ENCODE measurements at regions of chr22 and their contacts with region 1.

Region 1: DNA sequence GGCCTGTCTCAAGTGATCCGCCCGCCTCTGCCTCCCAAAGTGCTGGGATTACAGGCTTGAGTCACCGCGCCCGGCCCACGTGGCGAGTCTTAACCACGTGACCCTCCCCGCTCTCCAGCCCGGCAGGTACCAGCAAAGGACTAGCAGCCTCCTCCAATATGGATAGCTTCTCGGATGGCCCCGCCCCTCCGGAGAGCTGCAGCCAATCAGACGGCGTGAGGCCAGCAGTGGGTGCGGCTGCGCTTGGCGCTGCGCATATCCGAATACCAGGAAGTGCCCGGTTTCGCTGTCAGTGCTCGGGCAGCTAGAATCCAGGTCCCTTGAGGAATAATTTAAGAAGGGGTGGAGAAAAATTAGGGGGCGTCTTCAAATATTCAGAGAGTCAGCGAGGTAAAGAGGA is 14.7 kb upstream of the PISD start:
- DNase-seq: peak; percentile 84
- ATAC-seq: peak; percentile 99
- H3K4me3 Mint-ChIP-seq: peak overlapping the region; percentile 96
- H3K27ac Mint-ChIP-seq: peak overlapping the region; percentile 94
- H3K4me1 Mint-ChIP-seq: peaks cover 25% of the 10 kb centered on the region
- H3K27me3 Mint-ChIP-seq: no peaks in the 10 kb centered on the region
- CTCF ChIP-seq: no peak

Region 2: DNA sequence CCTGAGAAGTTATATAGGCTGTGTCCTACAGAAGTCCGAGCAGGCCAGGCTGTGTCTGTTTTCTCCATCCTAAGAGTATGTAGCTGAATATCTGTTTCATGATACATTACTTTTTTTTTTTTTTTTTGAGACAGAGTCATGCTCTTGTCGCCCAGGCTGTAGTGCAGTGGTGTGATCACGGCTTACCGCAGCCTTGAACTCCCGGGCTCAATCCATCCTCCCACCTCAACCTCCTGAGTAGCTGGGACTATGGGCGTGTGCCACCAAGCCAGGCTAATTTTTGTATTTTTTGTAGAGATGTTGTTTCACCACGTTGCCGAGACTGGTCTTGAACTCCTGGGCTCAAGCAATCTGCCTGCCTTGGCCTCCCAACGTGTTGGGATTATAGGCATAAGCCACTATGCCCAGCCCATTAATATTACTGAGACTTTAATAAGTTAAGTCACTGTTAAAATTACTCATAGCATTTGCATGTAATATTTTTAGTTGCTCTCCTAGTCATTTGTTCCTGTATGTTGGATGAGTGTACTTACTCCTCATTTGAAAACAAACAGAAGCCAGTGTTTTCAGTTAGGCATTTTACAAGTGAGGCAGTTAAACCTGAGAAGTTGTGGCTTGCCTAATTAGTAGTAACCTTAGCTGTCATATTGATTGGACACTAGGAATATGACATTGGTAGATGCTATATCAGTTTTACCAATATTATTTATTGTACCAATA is 251.2 kb before region 1 on chr22:
- CTCF ChIA-PET with region 1: no interaction called
- POLR2A ChIA-PET with region 1: no interaction called
- intact Hi-C with region 1: no loop called
- DNase-seq: no peak
- ATAC-seq: no peak
- H3K4me3 Mint-ChIP-seq: no peak overlapping the region
- H3K27ac Mint-ChIP-seq: no peak overlapping the region
- H3K4me1 Mint-ChIP-seq: no peaks in the 10 kb centered on the region
- H3K27me3 Mint-ChIP-seq: no peaks in the 10 kb centered on the region
- CTCF ChIP-seq: no peak

Region 3: DNA sequence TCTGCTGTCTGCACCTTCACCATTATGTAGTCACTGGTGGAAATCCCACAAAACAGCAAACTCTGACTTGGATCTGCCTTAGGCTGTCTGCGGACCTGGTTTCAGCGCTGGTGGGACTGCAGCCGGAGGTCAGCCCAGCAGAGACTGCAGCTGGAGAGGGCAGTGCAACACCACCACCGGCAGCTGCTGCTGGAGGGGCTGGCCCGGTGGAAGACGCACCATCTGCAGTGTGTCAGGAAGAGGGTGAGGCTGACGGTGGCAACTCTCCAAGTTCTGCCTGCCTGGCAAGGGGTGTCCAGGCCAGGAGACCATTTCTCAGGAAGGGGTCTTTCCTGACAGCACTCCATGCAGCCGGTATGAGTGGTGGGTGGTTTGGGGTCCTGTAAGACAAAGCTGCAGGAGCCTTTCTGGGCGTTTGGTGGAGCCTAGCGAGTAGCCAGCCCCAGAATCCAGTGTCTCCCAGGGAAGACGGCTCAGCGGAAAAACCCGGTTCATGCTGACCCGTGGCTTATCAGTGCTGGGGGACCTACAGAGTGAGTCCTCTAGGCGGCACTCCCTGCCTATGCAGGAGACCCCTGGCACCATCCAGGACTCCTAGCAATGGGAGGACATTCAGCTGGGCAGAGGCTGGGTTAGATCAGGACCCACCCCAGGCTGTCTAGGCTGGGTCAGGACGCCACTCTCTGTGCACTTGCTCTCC is 65.5 kb before region 1 on chr22:
- CTCF ChIA-PET with region 1: no interaction called
- POLR2A ChIA-PET with region 1: no interaction called
- intact Hi-C with region 1: no loop called
- DNase-seq: no peak
- ATAC-seq: no peak
- H3K4me3 Mint-ChIP-seq: no peak overlapping the region
- H3K27ac Mint-ChIP-seq: no peak overlapping the region
- H3K4me1 Mint-ChIP-seq: peaks cover 23% of the 10 kb centered on the region
- H3K27me3 Mint-ChIP-seq: no peaks in the 10 kb centered on the region
- CTCF ChIP-seq: no peak

Region 4: GRCh38 chr22:31637938-31638618 is 38.6 kb before region 1 on chr22:
- CTCF ChIA-PET with region 1: interaction called, 3 read pairs
- POLR2A ChIA-PET with region 1: interaction called, 13 read pairs
- intact Hi-C with region 1: loop called (anchors 2 kb)
- DNase-seq: no peak
- ATAC-seq: peak; percentile 67
- H3K4me3 Mint-ChIP-seq: peak overlapping the region; percentile 79
- H3K27ac Mint-ChIP-seq: peak overlapping the region; percentile 86
- H3K4me1 Mint-ChIP-seq: peaks cover 62% of the 10 kb centered on the region
- H3K27me3 Mint-ChIP-seq: no peaks in the 10 kb centered on the region
- CTCF ChIP-seq: no peak

Region 5: GRCh38 chr22:31707519-31707918 is 30.8 kb after region 1 on chr22:
- CTCF ChIA-PET with region 1: no interaction called
- POLR2A ChIA-PET with region 1: no interaction called
- intact Hi-C with region 1: no loop called
- DNase-seq: no peak
- ATAC-seq: no peak
- H3K4me3 Mint-ChIP-seq: no peak overlapping the region
- H3K27ac Mint-ChIP-seq: no peak overlapping the region
- H3K4me1 Mint-ChIP-seq: no peaks in the 10 kb centered on the region
- H3K27me3 Mint-ChIP-seq: no peaks in the 10 kb centered on the region
- CTCF ChIP-seq: no peak

Region 6: GRCh38 chr22:31790240-31790639 is 113.5 kb after region 1 on chr22:
- CTCF ChIA-PET with region 1: no interaction called
- POLR2A ChIA-PET with region 1: no interaction called
- intact Hi-C with region 1: loop called (anchors 5 kb)
- DNase-seq: no peak
- ATAC-seq: peak; percentile 82
- H3K4me3 Mint-ChIP-seq: peak overlapping the region; percentile 25
- H3K27ac Mint-ChIP-seq: peak overlapping the region; percentile 82
- H3K4me1 Mint-ChIP-seq: peaks cover 36% of the 10 kb centered on the region
- H3K27me3 Mint-ChIP-seq: no peaks in the 10 kb centered on the region
- CTCF ChIP-seq: no peak

Region 7: GRCh38 chr22:31802575-31802974 is 125.9 kb after region 1 on chr22:
- CTCF ChIA-PET with region 1: no interaction called
- POLR2A ChIA-PET with region 1: interaction called, 15 read pairs
- intact Hi-C with region 1: no loop called
- DNase-seq: no peak
- ATAC-seq: no peak
- H3K4me3 Mint-ChIP-seq: no peak overlapping the region
- H3K27ac Mint-ChIP-seq: no peak overlapping the region
- H3K4me1 Mint-ChIP-seq: no peaks in the 10 kb centered on the region
- H3K27me3 Mint-ChIP-seq: no peaks in the 10 kb centered on the region
- CTCF ChIP-seq: no peak